Endothelial cell of umbilical vein (primary cell): ENCODE measurements at regions of chr19 and their contacts with region 1.

Region 1: DNA sequence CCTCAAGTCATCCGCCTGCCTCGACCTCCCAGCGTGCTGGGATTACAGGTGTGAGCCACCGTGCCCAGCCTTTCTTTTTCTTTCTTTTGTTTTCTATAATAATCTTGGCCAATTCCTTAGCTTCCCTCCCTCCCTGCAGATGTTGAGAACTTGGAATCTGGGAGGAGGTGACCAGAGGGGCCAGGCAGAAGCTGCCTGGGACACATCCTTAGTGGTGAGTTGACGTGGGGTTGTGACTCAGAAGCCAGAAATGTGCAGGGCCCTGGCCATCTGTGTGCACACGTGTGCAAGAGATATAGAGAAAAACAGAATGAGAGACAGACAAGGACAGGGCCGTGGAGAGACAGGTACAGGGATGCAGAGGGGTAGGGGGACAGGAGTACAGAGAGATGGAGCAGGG is 154.3 kb downstream of the SIPA1L3 start:
- DNase-seq: no peak
- H3K4me3 ChIP-seq: no peak overlapping the region
- H3K27ac ChIP-seq: peak overlapping the region; percentile 42
- H3K4me1 ChIP-seq: peaks cover 22% of the 10 kb centered on the region
- H3K27me3 ChIP-seq: no peaks in the 10 kb centered on the region
- CTCF ChIP-seq: no peak
- POLR2A ChIP-seq: no peak

Region 2: GRCh38 chr19:38079926-38080380 is 18.7 kb after region 1 on chr19:
- CTCF ChIA-PET with region 1: interaction called, 4 read pairs
- POLR2A ChIA-PET with region 1: no interaction called
- dilution Hi-C with region 1: no loop called
- intact Hi-C with region 1: loop called (anchors 1 kb)
- DNase-seq: peak; percentile 81
- H3K4me3 ChIP-seq: no peak overlapping the region
- H3K27ac ChIP-seq: peak overlapping the region; percentile 31
- H3K4me1 ChIP-seq: peaks cover 14% of the 10 kb centered on the region
- H3K27me3 ChIP-seq: no peaks in the 10 kb centered on the region
- CTCF ChIP-seq: no peak
- POLR2A ChIP-seq: no peak